Heart left ventricle (tissue), 16 donors: ENCODE measurements at regions of chr11 and their contacts with region 1.

Region 1: DNA sequence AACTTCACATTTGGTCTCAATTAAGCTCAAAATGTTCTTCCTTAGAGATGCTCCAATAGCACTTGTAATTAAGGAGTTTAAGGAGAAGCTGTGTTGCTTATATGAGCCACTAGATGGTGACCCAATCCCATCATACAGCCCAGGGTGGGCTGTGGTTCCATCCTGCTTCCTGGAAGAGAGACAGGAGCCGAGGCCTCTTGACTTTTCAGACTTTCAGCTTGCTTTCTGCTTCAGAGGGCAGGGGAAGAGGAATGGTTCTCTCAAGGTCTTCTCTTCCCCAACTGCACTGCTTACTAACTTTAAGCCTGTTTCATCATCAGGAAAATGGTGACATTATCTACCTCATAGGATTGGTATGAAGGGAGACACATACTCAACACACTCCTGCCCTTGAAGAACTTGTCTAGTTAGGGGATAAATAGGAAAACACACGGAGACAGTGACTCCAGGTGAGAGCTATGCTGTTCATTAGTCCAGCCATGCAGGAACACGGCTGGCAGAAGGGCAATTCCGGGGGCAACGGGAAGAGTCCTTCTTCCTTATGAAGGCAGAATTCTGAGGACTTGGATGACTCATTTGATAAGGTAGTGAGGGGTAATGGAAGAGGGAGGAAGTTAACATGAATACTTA is 20.1 kb downstream of the TMEM218 start:
- DNase-seq: peak in 2 of 5 donors; percentile 46 to 54
- ATAC-seq: peak; percentile 74 to 92 (median 86)
- H3K4me3 ChIP-seq: no peak overlapping the region
- H3K27ac ChIP-seq: no peak overlapping the region
- H3K4me1 ChIP-seq: peaks cover 0 to 10% (median 4%) of the 10 kb centered on the region in 12 donors
- H3K27me3 ChIP-seq: no peaks in the 10 kb centered on the region
- CTCF ChIP-seq: peak; percentile 47 to 82 (median 68)
- POLR2A ChIP-seq: no peak

Region 2: DNA sequence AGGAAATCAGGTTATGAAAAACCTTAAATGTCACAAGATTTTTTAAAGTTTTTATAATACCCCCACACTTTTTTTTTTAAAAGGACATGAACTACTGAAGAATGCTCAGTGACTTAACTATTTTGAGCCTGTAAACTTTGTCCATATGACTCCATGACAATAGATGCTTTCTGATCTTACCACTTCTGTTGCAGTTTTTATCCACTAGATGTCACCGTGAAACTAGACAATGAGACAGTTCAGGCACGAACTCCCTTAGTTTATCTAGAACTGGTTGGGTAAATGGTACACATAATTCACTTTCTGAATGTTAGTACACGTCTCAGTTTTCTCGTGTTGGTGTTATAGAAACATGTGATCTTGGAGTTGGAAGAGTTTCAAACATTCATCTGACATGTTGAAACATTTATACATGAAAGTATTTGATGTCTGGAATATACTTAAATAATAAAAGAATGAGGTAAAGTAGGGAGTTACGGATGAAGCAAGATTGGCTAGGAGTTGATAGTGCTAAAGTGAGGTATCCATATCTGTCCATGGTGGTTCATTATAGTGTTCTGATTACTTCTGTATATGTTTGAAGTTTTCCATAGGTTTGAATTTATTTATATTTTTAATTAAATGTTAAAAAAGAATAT is 129.3 kb before region 1 on chr11:
- intact Hi-C with region 1: no loop called
- DNase-seq: no peak
- ATAC-seq: peak in 3 of 4 donors; percentile 81 to 85 (median 83)
- H3K4me3 ChIP-seq: no peak overlapping the region
- H3K27ac ChIP-seq: no peak overlapping the region
- H3K4me1 ChIP-seq: peaks cover 0 to 3% (median 0%) of the 10 kb centered on the region in 12 donors
- H3K27me3 ChIP-seq: no peaks in the 10 kb centered on the region
- CTCF ChIP-seq: peak; percentile 55 to 78 (median 70)
- POLR2A ChIP-seq: no peak

Region 3: GRCh38 chr11:125141686-125142535 is 50.5 kb after region 1 on chr11:
- intact Hi-C with region 1: loop called in 6 of 10 experiments (anchors 1 to 5 kb)
- DNase-seq: peak; percentile 30 to 66 (median 52)
- ATAC-seq: peak in 3 of 4 donors; percentile 76 to 83 (median 79)
- H3K4me3 ChIP-seq: no peak overlapping the region
- H3K27ac ChIP-seq: no peak overlapping the region
- H3K4me1 ChIP-seq: peaks cover 0 to 6% (median 0%) of the 10 kb centered on the region in 12 donors
- H3K27me3 ChIP-seq: peaks cover 0 to 26% (median 11%) of the 10 kb centered on the region in 9 donors
- CTCF ChIP-seq: peak; percentile 84 to 98 (median 94)
- POLR2A ChIP-seq: no peak

Region 4: GRCh38 chr11:125153837-125154236 is 62.5 kb after region 1 on chr11:
- intact Hi-C with region 1: no loop called
- DNase-seq: no peak
- ATAC-seq: no peak
- H3K4me3 ChIP-seq: no peak overlapping the region
- H3K27ac ChIP-seq: no peak overlapping the region
- H3K4me1 ChIP-seq: no peaks in the 10 kb centered on the region
- H3K27me3 ChIP-seq: peaks cover 0 to 11% (median 0%) of the 10 kb centered on the region in 9 donors
- CTCF ChIP-seq: no peak
- POLR2A ChIP-seq: no peak

Region 5: DNA sequence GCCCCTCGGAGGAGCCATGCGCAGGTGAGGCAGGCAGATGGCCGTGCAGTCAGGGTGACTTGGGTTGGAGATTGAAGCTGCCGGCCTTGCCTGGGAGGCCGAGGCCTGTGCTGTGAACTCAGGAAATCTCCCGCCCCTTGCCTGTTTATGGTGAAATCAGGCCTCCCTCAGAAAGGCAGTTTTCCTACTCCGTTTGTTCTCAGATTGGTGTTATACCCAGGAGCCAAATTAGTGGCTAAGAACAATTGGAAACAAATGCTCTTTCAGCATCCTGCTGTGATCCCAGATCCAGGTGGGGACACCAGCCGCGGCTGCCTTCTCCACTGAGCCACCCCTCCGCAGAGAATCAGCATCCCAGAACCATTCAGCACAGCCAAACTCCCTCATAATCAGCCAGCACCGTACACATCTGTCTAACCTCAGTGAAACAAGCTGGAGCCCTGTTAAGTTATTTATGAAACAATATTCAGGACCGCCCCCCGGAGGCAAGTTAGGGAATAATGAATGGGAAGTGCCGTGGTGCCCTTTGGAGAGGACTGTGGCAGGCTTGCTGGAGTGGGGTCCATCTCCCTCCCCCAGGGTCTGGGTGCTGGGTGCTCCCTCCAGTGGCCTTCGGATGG is 133.1 kb after region 1 on chr11:
- intact Hi-C with region 1: loop called in 1 of 10 experiments (anchors 10 kb)
- DNase-seq: peak in 3 of 5 donors; percentile 38 to 69 (median 43)
- ATAC-seq: peak; percentile 53 to 68 (median 63)
- H3K4me3 ChIP-seq: no peak overlapping the region
- H3K27ac ChIP-seq: peak overlapping the region in 7 of 12 donors; percentile 20 to 60 (median 37)
- H3K4me1 ChIP-seq: peaks cover 0 to 18% (median 3%) of the 10 kb centered on the region in 12 donors
- H3K27me3 ChIP-seq: no peaks in the 10 kb centered on the region
- CTCF ChIP-seq: peak in 8 of 12 donors; percentile 21 to 54 (median 38)
- POLR2A ChIP-seq: no peak

Region 6: DNA sequence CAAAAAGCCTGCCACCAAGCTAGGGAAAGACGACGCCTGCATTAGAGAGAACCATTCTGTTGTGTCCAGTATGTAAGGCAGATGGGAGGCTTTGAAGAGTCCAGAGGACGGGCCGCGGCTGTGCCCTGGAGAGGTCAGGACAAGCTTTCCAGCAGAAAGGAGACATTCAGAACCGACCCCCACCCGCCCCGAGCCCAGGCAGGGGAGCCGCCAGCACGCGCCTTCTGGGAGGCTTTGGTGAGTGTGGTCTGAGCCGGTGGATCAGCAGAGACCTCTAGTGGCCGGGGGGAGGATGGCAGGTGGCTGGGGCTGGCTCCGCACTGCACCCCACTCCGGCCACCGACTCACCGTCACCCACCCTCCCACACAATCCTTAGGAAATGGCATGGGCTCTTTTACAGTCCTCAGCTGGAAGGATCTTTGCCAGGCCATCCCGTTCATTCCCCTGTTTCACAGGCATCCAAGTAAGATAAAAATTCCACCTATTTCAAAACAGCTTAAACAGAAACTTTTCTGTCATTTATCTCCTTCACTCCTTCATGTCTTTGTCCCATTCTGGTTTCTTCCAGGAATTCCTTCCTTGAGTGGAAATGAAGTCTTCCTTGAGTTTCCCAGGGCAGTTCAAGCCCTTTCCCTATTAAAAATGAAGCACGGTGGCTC is 313.5 kb after region 1 on chr11:
- intact Hi-C with region 1: loop called in 8 of 10 experiments (anchors 1 to 10 kb)
- DNase-seq: peak; percentile 61 to 84 (median 74)
- ATAC-seq: peak; percentile 83 to 90 (median 89)
- H3K4me3 ChIP-seq: no peak overlapping the region
- H3K27ac ChIP-seq: no peak overlapping the region
- H3K4me1 ChIP-seq: peaks cover 0 to 26% (median 8%) of the 10 kb centered on the region in 12 donors
- H3K27me3 ChIP-seq: no peaks in the 10 kb centered on the region
- CTCF ChIP-seq: peak; percentile 87 to 98 (median 96)
- POLR2A ChIP-seq: no peak

Region 7: DNA sequence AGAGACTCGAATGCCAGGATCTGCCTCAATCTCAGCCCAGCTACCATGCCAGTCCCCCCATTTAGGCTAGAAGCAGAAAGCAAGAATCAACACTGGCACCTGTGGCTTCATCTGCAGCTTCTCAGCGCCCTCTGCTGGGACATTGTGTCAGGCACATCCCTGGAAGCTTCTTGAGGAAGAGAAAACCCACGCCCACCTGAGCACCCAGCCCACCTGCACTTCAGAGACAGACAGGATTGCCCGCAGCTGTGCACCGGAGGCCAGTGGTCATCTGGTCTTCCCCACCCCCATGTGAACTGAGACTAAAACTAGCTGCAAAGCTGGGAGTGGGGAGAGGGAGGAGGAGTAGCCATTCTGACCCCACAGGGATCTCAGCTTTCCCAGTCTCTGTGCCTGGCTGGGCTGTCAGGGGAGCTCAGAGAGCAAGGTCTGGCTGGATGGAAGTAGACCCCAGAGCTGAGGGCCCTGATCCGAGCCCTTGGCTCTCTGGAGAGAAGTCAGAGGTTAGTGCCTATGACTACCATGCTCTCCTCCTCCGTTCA is 337.9 kb after region 1 on chr11:
- intact Hi-C with region 1: loop called in 4 of 10 experiments (anchors 5 to 10 kb)
- DNase-seq: peak; percentile 40 to 76 (median 58)
- ATAC-seq: no peak
- H3K4me3 ChIP-seq: no peak overlapping the region
- H3K27ac ChIP-seq: peak overlapping the region in 1 of 12 donors; percentile 42
- H3K4me1 ChIP-seq: peaks cover 0 to 39% (median 17%) of the 10 kb centered on the region in 12 donors
- H3K27me3 ChIP-seq: no peaks in the 10 kb centered on the region
- CTCF ChIP-seq: peak; percentile 40 to 70 (median 60)
- POLR2A ChIP-seq: no peak

Region 8: DNA sequence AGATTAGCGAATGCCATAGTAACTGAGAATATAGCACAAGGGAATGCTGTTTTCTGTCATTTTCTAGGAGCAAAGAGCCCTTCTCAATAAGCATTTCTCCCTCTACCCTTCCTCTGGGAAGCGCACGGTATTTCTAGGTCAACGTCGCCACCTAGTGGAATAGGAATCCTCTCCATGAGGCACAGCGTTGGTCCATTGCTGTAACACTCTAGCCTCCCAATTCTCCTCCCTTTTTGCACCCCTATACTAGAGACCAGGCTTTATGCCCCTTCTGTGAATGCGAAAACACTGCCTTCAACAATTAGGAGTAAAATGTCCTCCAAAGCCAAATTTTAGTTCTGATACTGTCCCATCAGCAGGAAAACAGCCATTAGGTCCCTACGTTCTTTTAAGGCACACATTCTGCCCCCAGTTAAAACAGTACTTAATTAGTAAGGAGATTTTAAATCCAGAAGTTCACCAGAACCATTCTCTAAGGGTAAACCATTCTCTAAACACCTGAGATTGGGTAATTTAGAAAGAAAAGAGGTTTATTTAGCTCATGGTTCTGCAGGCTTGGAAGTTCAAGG is 783.3 kb after region 1 on chr11:
- intact Hi-C with region 1: loop called in 2 of 10 experiments (anchors 10 kb)
- DNase-seq: peak in 4 of 5 donors; percentile 41 to 55 (median 48)
- ATAC-seq: peak in 3 of 4 donors; percentile 91 to 98 (median 93)
- H3K4me3 ChIP-seq: peak overlapping the region in 8 of 12 donors; percentile 12 to 38 (median 28)
- H3K27ac ChIP-seq: no peak overlapping the region
- H3K4me1 ChIP-seq: no peaks in the 10 kb centered on the region
- H3K27me3 ChIP-seq: no peaks in the 10 kb centered on the region
- CTCF ChIP-seq: peak; percentile 60 to 82 (median 72)
- POLR2A ChIP-seq: no peak